ENCODE measurements at regions of chr14 and their contacts with region 1.

Region 1: GRCh38 chr14:24241829-24242443 is 487 bp downstream of the TINF2 start:
- DNase-seq: peak; percentile 94
- H3K4me3 Mint-ChIP-seq: peak overlapping the region; percentile 84
- H3K27ac Mint-ChIP-seq: peak overlapping the region; percentile 96
- H3K4me1 Mint-ChIP-seq: peaks cover 59% of the 10 kb centered on the region
- H3K27me3 Mint-ChIP-seq: no peaks in the 10 kb centered on the region

Region 2: DNA sequence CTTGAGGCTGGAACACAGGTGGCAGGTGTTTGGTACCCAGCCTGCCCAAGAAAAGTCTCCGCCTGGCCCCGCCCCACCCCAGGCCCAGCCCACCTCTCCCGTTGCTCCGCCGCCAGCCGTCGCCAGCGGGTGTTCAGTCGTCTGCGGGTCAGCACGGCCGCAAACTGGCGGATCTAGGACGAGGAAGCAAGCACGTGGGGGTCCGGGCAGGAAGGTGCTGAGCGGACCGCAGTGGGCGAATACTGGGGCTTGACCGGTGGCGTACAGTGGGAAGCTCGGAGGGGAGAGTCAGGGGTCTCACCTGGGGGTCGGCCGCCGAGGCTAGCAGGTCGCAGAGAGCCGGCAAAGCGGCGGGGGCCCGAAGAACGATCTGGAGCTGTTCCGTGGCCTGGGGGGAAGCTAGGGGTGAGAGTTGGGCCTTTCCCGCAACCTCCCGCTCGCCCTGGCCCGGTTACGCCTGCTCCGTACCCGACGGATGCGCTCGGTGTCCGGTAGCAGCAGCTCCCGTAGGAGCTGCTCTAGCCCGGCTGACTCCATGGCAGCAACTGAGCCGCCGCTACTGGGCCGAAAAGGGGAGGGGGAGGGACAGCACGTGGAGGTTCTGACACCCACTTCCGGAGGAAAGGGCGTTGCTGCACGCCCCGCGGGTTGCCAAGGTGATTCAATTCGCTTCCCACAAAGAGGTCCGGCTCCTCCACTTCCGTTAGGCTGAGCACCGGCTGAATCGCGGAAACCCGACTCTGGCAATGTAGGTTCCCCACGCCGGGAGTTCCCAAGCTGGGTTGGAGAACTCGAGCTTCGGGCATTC is 53.5 kb before region 1 on chr14 and contains the start of gene IPO4:
- CTCF ChIA-PET with region 1: interaction called, 3 read pairs
- POLR2A ChIA-PET with region 1: interaction called, 3 read pairs
- intact Hi-C with region 1: loop called (anchors 2 kb)
- DNase-seq: peak; percentile 97
- H3K4me3 Mint-ChIP-seq: peak within 1 kb of the TSS; percentile 89
- H3K27ac Mint-ChIP-seq: peak within 1 kb of the TSS; percentile 74
- H3K4me1 Mint-ChIP-seq: peaks cover 40% of the 10 kb centered on the region
- H3K27me3 Mint-ChIP-seq: no peaks in the 10 kb centered on the region
- total RNA-seq, gene IPO4: 69.5 to 72.6 TPM

Region 3: GRCh38 chr14:24271134-24271833 is 29.3 kb after region 1 on chr14 and contains the start of gene RABGGTA:
- CTCF ChIA-PET with region 1: interaction called, 45 read pairs
- POLR2A ChIA-PET with region 1: interaction called, 19 read pairs
- intact Hi-C with region 1: loop called (anchors 1 kb)
- DNase-seq: peak; percentile 93
- H3K4me3 Mint-ChIP-seq: peak within 1 kb of the TSS; percentile 84
- H3K27ac Mint-ChIP-seq: peak within 1 kb of the TSS; percentile 94
- H3K4me1 Mint-ChIP-seq: peaks cover 42% of the 10 kb centered on the region
- H3K27me3 Mint-ChIP-seq: no peaks in the 10 kb centered on the region
- total RNA-seq, gene RABGGTA: 39.5 to 40.6 TPM

Region 4: DNA sequence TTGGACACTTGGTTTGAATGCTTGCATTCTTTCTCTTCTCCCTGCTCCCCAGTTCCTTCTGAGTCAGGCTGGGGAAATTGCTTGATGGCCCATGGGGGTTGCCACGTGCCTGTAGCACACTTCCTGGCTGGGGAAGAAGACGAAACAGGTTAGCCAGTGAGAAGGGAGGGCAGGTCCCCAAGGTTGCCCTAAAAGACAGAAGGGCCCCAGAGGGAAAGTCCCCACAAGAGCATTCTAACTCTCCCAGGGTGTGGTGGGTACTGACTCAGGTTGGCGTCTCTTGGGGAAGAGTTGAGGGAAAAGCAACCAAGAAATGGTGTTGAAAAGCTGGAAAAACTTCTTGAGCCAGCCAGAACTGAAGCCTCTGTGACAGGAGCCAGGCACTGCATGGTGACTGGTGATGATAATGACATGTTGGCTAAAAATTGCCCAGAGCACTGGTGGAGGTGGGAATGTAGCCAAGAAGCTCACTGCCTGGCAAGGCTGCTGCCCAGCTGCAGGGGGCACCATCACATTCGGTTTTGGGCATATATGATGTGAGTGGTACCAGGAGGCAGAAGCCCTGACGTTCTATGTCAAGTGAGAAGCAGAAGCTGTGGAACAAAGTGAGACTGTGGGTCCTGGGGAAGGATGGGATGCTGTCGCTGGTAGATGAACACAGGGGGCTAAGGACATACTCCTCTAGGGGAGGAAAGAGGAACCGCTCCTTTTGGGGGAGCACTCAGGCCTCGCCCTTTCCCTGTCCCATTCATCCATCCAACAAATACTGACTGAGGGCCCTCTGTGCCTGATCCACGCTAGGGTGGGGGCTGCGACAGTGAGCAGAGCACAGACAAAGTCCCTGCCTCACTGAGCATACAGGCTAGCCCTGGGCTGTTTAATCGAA is 37.6 kb after region 1 on chr14:
- CTCF ChIA-PET with region 1: interaction called, 17 read pairs
- POLR2A ChIA-PET with region 1: interaction called, 16 read pairs
- intact Hi-C with region 1: loop called (anchors 1 kb)
- DNase-seq: peak; percentile 77
- H3K4me3 Mint-ChIP-seq: no peak overlapping the region
- H3K27ac Mint-ChIP-seq: peak overlapping the region; percentile 70
- H3K4me1 Mint-ChIP-seq: peaks cover 46% of the 10 kb centered on the region
- H3K27me3 Mint-ChIP-seq: no peaks in the 10 kb centered on the region

Region 5: DNA sequence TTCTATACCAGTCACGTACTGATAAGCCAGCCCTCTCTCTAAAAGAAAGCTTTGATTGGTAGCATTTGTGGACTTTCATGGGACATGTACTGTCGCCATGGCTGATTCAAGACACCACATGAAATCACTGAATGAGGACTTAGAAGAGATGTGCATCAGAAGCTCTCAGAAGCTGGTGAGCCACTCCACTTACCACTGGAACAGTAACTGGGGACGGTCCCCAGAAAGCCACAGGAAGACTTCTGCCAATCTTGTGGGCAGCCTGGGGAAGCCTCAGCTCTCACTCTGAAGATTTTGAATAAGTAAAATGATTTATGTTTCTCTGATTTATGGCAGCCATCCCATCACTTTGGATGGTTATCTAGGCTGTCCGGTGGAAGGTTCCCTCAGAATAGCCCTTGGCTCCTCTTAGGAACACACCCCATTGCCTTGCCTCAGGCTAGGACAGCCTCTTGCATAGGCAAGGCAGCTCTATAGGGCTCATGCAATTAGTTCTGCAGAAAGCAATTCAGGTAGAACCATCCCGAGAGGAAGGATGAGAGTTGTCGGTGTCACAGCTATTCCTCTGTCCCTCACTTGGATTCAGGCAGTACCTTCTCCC is 47.8 kb after region 1 on chr14:
- CTCF ChIA-PET with region 1: interaction called, 81 read pairs
- POLR2A ChIA-PET with region 1: interaction called, 7 read pairs
- intact Hi-C with region 1: loop called (anchors 2 kb)
- DNase-seq: peak; percentile 90
- H3K4me3 Mint-ChIP-seq: no peak overlapping the region
- H3K27ac Mint-ChIP-seq: peak overlapping the region; percentile 8
- H3K4me1 Mint-ChIP-seq: peaks cover 25% of the 10 kb centered on the region
- H3K27me3 Mint-ChIP-seq: peaks cover 2% of the 10 kb centered on the region

Region 6: DNA sequence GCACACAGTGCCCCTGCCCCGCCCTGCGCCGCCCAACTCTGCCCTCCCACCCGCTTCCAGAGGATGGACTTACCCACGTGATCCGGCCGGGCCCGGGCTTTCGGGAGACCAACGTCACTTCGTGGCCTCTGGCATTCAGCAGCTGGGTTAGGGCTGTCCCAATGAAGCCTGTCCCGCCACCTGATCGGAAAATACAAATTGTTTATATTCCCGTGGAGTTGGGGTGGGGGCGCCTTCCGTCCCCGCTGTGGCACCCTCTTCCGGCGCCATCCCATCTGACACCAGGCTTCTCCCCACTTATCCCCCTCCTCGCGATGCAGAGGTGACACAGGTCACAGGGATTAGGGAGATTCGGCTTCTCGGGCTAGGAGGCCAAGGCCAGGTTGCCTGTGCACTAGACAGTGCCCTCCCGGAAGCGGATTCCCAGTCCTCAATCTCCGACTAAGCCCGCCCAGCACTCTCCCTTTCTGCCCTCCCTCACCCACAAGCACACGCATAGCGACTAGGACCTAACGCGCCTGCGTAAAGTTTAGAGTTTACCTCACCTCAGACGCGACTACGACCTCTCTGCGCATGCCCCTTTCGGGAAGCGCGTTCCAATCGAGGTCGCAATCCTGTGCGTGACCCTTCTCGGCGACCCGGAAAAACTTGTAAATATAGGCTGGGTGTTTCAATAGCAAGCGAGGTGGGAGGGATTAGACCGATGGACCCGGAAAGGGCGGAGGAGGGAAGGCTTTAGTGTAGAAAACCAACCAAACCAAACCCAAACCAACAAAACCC is 200.5 kb after region 1 on chr14 and contains the start of gene SDR39U1:
- CTCF ChIA-PET with region 1: interaction called, 10 read pairs
- POLR2A ChIA-PET with region 1: interaction called, 4 read pairs
- intact Hi-C with region 1: loop called (anchors 1 kb)
- DNase-seq: peak; percentile 98
- H3K4me3 Mint-ChIP-seq: peak within 1 kb of the TSS; percentile 95
- H3K27ac Mint-ChIP-seq: peak within 1 kb of the TSS; percentile 99
- H3K4me1 Mint-ChIP-seq: peaks cover 43% of the 10 kb centered on the region
- H3K27me3 Mint-ChIP-seq: no peaks in the 10 kb centered on the region
- total RNA-seq, gene SDR39U1: 36.2 to 43.8 TPM

Measured in activated CD4-positive, alpha-beta memory T cell treated with anti-CD3 and anti-CD28 coated beads for 36 hours (primary cell).